ENCODE measurements at regions of chr5 and their contacts with region 1.

Region 1: GRCh38 chr5:75037135-75037534 is 15.2 kb downstream of the GCNT4 start:
- DNase-seq: no peak
- H3K4me3 ChIP-seq: no peak overlapping the region
- H3K4me3 Mint-ChIP-seq: peak overlapping the region in 1 of 8 donors; percentile 36
- H3K27ac ChIP-seq: no peak overlapping the region
- H3K27ac Mint-ChIP-seq: peak overlapping the region in 2 of 7 donors; percentile 33 to 43
- H3K4me1 ChIP-seq: peaks cover 32% of the 10 kb centered on the region
- H3K4me1 Mint-ChIP-seq: peaks cover 24 to 71% (median 62%) of the 10 kb centered on the region in 4 donors
- H3K27me3 ChIP-seq: no peaks in the 10 kb centered on the region
- H3K27me3 Mint-ChIP-seq: no peaks in the 10 kb centered on the region

Region 2: GRCh38 chr5:73733219-73733618 is 1303.9 kb before region 1 on chr5:
- CTCF ChIA-PET with region 1: no interaction called
- POLR2A ChIA-PET with region 1: no interaction called
- intact Hi-C with region 1: no loop called
- DNase-seq: no peak
- H3K4me3 ChIP-seq: no peak overlapping the region
- H3K4me3 Mint-ChIP-seq: no peak overlapping the region
- H3K27ac ChIP-seq: no peak overlapping the region
- H3K27ac Mint-ChIP-seq: no peak overlapping the region
- H3K4me1 ChIP-seq: no peaks in the 10 kb centered on the region
- H3K4me1 Mint-ChIP-seq: no peaks in the 10 kb centered on the region
- H3K27me3 ChIP-seq: no peaks in the 10 kb centered on the region
- H3K27me3 Mint-ChIP-seq: peaks cover 3 to 6% of the 10 kb centered on the region in 2 donors

Region 3: GRCh38 chr5:74974451-74975091 is 62.6 kb before region 1 on chr5:
- CTCF ChIA-PET with region 1: no interaction called
- POLR2A ChIA-PET with region 1: interaction called, 6 read pairs
- intact Hi-C with region 1: loop called (anchors 5 kb)
- DNase-seq: peak; percentile 26 to 43 (median 36)
- H3K4me3 ChIP-seq: no peak overlapping the region
- H3K4me3 Mint-ChIP-seq: peak overlapping the region in 4 of 8 donors; percentile 6 to 69 (median 48)
- H3K27ac ChIP-seq: no peak overlapping the region
- H3K27ac Mint-ChIP-seq: peak overlapping the region; percentile 48 to 87 (median 77)
- H3K4me1 ChIP-seq: peaks cover 36% of the 10 kb centered on the region
- H3K4me1 Mint-ChIP-seq: peaks cover 17 to 41% (median 33%) of the 10 kb centered on the region in 4 donors
- H3K27me3 ChIP-seq: no peaks in the 10 kb centered on the region
- H3K27me3 Mint-ChIP-seq: no peaks in the 10 kb centered on the region

Region 4: GRCh38 chr5:75656311-75657003 is 619.3 kb after region 1 on chr5:
- CTCF ChIA-PET with region 1: no interaction called
- POLR2A ChIA-PET with region 1: no interaction called
- intact Hi-C with region 1: no loop called
- DNase-seq: no peak
- H3K4me3 ChIP-seq: no peak overlapping the region
- H3K4me3 Mint-ChIP-seq: no peak overlapping the region
- H3K27ac ChIP-seq: no peak overlapping the region
- H3K27ac Mint-ChIP-seq: no peak overlapping the region
- H3K4me1 ChIP-seq: no peaks in the 10 kb centered on the region
- H3K4me1 Mint-ChIP-seq: no peaks in the 10 kb centered on the region
- H3K27me3 ChIP-seq: no peaks in the 10 kb centered on the region
- H3K27me3 Mint-ChIP-seq: peaks cover 0 to 2% of the 10 kb centered on the region in 2 donors